ENCODE measurements at regions of chr5 and their contacts with region 1.

Region 1: GRCh38 chr5:136020383-136021015 is 8.3 kb upstream of the TGFBI start:
- DNase-seq: peak; percentile 72
- H3K4me3 ChIP-seq: no peak overlapping the region
- H3K27ac ChIP-seq: peak overlapping the region; percentile 5 to 84 (median 72)
- H3K4me1 ChIP-seq: peaks cover 0 to 81% (median 59%) of the 10 kb centered on the region in 4 donors
- H3K27me3 ChIP-seq: no peaks in the 10 kb centered on the region
- CTCF ChIP-seq: no peak
- EP300 ChIP-seq: peak in 3 of 4 donors; percentile 31 to 56 (median 38)
- POLR2A ChIP-seq: no peak

Region 2: GRCh38 chr5:136062366-136063274 is 42.1 kb after region 1 on chr5:
- intact Hi-C with region 1: loop called (anchors 2 kb)
- DNase-seq: no peak
- H3K4me3 ChIP-seq: no peak overlapping the region
- H3K27ac ChIP-seq: peak overlapping the region in 2 of 4 donors; percentile 25 to 80
- H3K4me1 ChIP-seq: peaks cover 3 to 78% (median 54%) of the 10 kb centered on the region in 4 donors
- H3K27me3 ChIP-seq: no peaks in the 10 kb centered on the region
- CTCF ChIP-seq: peak in 3 of 4 experiments; percentile 35 to 45 (median 39)
- EP300 ChIP-seq: no peak
- POLR2A ChIP-seq: no peak